ENCODE measurements at regions of chr1 and their contacts with region 1.

Region 1: GRCh38 chr1:167599957-167600581 is 30.0 kb upstream of the RCSD1 start:
- DNase-seq: no peak

Region 2: DNA sequence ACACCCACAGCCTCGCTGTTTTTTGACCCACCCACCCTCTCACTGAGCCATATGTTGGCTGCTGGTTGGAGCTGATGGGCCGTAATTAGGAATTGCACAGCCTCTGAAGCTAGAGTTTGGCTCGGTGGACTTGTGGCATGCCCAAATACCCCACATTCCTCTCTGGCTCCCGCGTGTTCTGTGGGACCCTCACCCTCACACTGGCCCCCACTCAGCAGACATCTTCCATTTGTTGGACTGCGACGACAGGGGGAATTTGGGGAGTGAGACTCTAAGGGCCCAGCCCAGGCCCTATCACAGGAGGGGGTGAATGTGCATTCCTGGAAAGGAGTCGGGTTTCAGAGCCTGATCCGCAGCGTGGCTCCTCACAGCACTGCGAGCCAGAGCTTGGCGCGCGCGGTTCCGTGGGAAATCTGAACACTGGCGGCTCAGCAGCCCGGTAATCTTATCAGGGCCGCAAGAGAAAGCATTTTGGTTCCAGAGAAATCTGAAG is 35.1 kb after region 1 on chr1:
- intact Hi-C with region 1: loop called (anchors 5 kb)
- DNase-seq: no peak